Gastrocnemius medialis (tissue), 4 donors: ENCODE measurements at regions of chr12 and their contacts with region 1.

Region 1: DNA sequence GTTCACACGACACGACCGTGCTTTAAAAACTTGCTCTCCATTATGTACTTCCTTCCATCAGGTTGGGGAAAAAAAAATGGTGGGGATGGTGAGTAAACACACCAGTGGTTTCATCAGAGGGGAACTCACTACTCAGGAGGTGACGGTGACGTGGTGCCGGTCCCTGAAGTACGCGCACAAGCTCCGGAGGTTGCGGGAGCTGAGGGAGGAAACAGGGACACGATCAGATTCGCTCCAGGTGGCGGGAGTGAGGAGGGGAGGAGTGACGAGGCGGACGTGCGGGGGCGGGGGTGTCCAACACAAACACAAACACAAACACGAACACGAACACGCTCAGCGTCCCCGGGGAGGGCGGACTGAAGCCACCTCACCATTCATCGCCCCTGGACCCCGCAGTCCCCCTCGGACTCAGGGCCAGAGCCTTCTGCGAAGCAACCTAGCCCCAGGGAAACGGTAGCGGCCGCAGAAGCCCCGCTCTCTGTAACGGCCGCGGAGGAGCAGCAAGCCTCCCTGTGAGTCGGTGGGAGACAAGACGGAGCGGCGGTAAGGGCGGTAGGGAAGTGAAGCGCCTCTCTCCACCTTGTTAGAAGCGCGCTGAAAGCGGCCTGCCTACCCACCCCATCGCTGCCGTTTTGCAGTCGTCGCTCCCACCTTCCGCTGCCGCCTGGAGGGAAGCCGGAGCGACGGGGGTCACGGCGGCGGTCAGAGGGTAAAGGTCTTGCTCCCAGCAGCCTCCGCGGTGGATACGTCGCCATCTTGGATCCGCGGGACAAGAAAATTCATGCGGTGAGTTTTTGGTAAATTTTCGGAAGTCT is at the start of gene CNOT2:
- DNase-seq: peak; percentile 85 to 90
- ATAC-seq: peak; percentile 94
- H3K4me3 ChIP-seq: peak within 1 kb of the TSS; percentile 70 to 95 (median 82)
- H3K27ac ChIP-seq: peak within 1 kb of the TSS; percentile 92 to 99 (median 98)
- H3K4me1 ChIP-seq: peaks cover 38 to 42% of the 10 kb centered on the region in 2 donors
- H3K27me3 ChIP-seq: no peaks in the 10 kb centered on the region
- CTCF ChIP-seq: no peak
- POLR2A ChIP-seq: peak; percentile 65 to 80
- total RNA-seq, gene CNOT2: 64.1 to 107 (median 71.6) TPM

Region 2: DNA sequence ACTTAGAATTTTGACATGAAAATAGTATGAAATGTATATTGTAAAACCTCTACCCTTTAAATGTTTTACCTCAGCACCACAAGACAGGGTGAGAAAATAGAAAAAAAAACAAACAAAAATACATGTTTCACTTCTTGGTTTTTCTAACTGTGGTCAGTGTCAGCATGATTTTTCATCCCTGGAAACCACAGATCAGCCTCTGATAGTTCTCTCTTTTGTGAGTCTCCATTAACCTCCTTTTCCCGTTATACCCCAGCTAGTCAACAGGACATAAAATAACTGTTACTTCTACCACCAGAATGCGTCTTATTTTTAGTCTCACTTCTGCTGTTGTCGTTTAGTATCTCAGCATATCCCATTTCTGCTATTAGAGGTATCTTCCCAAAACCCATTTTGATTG is 74.9 kb after region 1 on chr12:
- in situ Hi-C with region 1: no loop called
- intact Hi-C with region 1: loop called (anchors 10 kb)
- DNase-seq: no peak
- ATAC-seq: no peak
- H3K4me3 ChIP-seq: no peak overlapping the region
- H3K27ac ChIP-seq: no peak overlapping the region
- H3K4me1 ChIP-seq: peaks cover 0 to 9% of the 10 kb centered on the region in 2 donors
- H3K27me3 ChIP-seq: no peaks in the 10 kb centered on the region
- CTCF ChIP-seq: no peak
- POLR2A ChIP-seq: no peak

Region 3: GRCh38 chr12:70365648-70366518 is 123.0 kb after region 1 on chr12 and contains the start of gene KCNMB4:
- in situ Hi-C with region 1: no loop called
- intact Hi-C with region 1: loop called (anchors 5 kb)
- DNase-seq: peak in 1 of 2 donors; percentile 20
- ATAC-seq: peak; percentile 34 to 64
- H3K4me3 ChIP-seq: peak within 1 kb of the TSS; percentile 60 to 83 (median 74)
- H3K27ac ChIP-seq: peak within 1 kb of the TSS in 3 of 4 donors; percentile 16 to 56 (median 47)
- H3K4me1 ChIP-seq: peaks cover 5 to 12% of the 10 kb centered on the region in 2 donors
- H3K27me3 ChIP-seq: peaks cover 20 to 34% (median 33%) of the 10 kb centered on the region in 3 donors
- CTCF ChIP-seq: no peak
- POLR2A ChIP-seq: no peak
- total RNA-seq, gene KCNMB4: 0.71 to 1.4 (median 1.3) TPM

Region 4: GRCh38 chr12:70543444-70543843 is 300.5 kb after region 1 on chr12:
- in situ Hi-C with region 1: no loop called
- intact Hi-C with region 1: no loop called
- DNase-seq: no peak
- ATAC-seq: no peak
- H3K4me3 ChIP-seq: no peak overlapping the region
- H3K27ac ChIP-seq: peak overlapping the region in 3 of 4 donors; percentile 14 to 56 (median 55)
- H3K4me1 ChIP-seq: no peaks in the 10 kb centered on the region
- H3K27me3 ChIP-seq: no peaks in the 10 kb centered on the region
- CTCF ChIP-seq: no peak
- POLR2A ChIP-seq: no peak

Region 5: DNA sequence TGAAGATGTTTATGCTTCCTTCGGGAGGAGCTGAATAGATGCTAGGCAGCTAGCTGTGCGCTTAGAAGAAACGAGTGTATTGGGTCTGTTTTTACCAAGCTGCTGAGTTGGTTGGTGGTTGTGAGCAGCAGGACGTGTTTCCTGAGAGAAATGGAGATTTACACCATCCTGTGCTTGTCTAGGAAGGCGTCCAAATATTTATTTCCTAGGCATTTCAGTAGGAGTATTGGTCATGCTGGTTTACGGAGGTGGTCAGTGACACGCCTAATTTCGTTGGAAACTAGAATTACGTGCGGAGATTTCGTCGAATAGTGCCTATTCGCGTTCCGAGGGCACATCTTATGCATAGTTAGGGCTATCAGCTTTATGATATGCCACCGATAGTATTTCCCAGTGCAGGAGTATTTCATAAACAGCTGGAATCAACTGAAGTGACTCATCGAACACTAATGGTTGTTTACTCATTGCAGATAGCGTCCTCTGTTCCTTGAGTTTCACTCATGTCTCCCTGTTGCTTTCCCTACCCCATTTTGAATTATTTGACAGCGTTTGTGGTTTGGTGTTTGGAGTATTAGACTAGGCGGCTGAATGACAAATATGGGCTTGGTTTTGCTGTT is 1597.4 kb after region 1 on chr12:
- in situ Hi-C with region 1: no loop called
- intact Hi-C with region 1: loop called (anchors 10 kb)
- DNase-seq: no peak
- ATAC-seq: peak; percentile 49 to 80
- H3K4me3 ChIP-seq: peak overlapping the region; percentile 61 to 84 (median 78)
- H3K27ac ChIP-seq: peak overlapping the region; percentile 91 to 98 (median 97)
- H3K4me1 ChIP-seq: peaks cover 51% of the 10 kb centered on the region in 2 donors
- H3K27me3 ChIP-seq: no peaks in the 10 kb centered on the region
- CTCF ChIP-seq: no peak
- POLR2A ChIP-seq: no peak